ENCODE measurements at regions of chr13 and their contacts with region 1.

Region 1: DNA sequence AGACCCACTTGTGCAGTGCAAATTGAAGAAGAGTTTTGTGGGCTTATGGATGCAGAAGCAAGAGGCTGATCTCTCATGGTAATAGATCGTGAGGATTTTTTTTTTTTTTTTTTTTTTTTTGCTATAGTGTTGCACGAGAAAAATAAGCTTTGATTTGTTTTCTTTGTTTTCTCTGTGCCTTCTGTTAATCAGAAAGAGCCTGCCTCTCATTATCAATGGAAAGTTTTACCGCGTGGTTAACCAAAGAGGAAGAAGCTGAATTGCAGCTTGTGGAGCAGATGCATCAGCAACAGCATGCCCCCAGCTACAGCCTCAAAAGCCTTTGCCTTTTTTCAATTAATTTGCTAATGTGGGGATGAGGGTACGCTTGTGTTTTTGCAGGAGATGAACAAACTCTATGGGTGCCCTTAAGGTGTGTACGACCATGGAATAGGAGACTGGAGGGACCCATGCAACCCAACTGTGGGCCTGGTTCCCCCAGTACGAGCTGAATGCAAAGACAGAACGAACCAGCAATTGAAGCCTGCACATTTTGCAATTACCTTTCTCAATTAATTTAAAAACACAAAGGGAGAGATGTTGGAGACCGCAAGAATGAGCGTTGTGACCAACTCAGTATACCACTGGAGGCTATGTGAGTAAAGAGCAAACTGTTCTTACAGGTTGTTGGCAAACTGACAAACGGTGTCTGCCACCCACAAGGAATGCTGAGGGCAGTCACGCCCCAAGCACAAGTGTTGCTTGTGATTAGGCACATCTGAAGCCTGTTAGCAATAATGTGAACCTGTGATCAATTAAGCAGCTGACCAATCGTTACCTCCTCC is 58.6 kb upstream of the SPRY2 start:
- DNase-seq: peak; percentile 28
- ATAC-seq: peak; percentile 50
- H3K4me3 Mint-ChIP-seq: no peak overlapping the region
- H3K27ac Mint-ChIP-seq: peak overlapping the region; percentile 55
- H3K4me1 Mint-ChIP-seq: peaks cover 27% of the 10 kb centered on the region
- H3K27me3 Mint-ChIP-seq: peaks cover 3% of the 10 kb centered on the region

Region 2: DNA sequence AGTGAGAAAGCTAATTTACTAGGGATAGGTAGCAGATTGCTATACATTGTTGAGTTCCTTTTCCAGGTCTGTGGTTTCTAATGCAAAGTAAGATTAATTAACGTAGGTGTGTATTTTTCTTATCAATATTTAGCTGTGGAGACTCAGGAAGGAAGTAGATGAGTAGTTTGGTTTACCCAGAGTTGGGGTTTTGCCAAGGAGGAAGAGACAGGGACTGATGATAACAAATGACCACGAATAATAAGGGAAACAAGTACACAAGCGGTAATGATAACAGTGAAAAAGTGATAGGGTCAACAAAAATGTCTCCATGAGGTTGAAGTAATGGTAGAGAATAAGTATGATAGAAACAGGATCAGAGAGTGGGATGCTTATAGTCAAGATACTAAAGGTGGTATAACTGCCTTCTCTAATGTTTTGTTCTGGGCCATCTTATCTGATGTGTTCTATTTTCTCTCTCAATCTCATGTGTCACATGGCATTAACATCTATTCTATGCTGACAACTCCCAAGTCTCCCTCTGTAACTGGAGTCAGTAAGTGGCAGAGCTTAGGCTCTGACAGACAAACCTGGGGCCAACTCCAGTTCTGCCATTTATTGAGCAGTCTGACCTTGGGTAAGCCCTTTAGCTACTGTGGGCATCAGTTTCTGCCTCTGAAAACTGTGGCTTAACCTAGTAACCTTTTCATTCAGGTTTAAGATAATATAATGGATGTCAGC is 1749.4 kb before region 1 on chr13:
- CTCF ChIA-PET with region 1: no interaction called
- POLR2A ChIA-PET with region 1: interaction called, 10 read pairs
- intact Hi-C with region 1: no loop called
- DNase-seq: no peak
- ATAC-seq: no peak
- H3K4me3 Mint-ChIP-seq: no peak overlapping the region
- H3K27ac Mint-ChIP-seq: no peak overlapping the region
- H3K4me1 Mint-ChIP-seq: peaks cover 12% of the 10 kb centered on the region
- H3K27me3 Mint-ChIP-seq: no peaks in the 10 kb centered on the region

Region 3: DNA sequence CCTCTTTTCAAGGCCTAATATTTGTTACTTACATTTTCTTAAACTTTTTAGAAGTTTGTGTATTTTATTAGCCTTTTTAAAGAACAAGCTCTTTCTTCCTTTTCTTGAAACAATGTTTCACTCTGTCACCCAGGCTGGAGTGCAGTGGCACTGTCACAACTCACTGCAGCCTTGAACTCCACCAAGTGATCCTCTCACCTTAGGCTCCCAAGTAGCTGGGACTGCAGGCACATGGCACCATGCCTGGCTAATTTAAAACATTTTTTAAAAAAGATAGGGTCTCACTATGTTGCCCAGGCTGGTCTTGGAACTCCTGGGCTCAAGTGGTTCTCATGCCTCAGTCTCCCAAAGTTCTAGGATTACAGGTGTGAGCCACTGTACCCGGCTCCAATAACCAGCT is 133.6 kb after region 1 on chr13:
- CTCF ChIA-PET with region 1: no interaction called
- POLR2A ChIA-PET with region 1: no interaction called
- intact Hi-C with region 1: no loop called
- DNase-seq: no peak
- ATAC-seq: no peak
- H3K4me3 Mint-ChIP-seq: no peak overlapping the region
- H3K27ac Mint-ChIP-seq: no peak overlapping the region
- H3K4me1 Mint-ChIP-seq: no peaks in the 10 kb centered on the region
- H3K27me3 Mint-ChIP-seq: no peaks in the 10 kb centered on the region

Region 4: GRCh38 chr13:80547341-80547740 is 147.8 kb after region 1 on chr13:
- CTCF ChIA-PET with region 1: no interaction called
- POLR2A ChIA-PET with region 1: no interaction called
- intact Hi-C with region 1: no loop called
- DNase-seq: no peak
- ATAC-seq: no peak
- H3K4me3 Mint-ChIP-seq: no peak overlapping the region
- H3K27ac Mint-ChIP-seq: no peak overlapping the region
- H3K4me1 Mint-ChIP-seq: peaks cover 5% of the 10 kb centered on the region
- H3K27me3 Mint-ChIP-seq: no peaks in the 10 kb centered on the region

Region 5: DNA sequence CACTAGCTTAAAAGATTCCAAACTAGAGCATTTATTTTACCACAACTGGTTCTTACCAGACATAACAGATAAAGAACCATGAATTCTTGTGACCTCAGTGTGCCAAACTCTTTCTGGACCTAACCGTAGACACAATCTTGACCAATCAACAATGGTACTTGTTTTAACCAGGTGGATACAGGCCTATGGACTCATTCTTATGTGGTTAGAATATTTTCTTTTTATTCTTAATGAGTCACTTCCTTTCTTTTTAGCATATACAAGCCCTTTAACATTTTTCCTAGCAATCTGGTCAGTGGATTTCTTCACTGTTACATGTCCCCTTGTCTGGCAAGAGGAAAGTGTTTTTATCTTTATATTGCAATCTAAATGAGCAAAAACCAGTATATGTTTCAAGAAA is 733.5 kb after region 1 on chr13:
- CTCF ChIA-PET with region 1: no interaction called
- POLR2A ChIA-PET with region 1: no interaction called
- intact Hi-C with region 1: loop called in 1 of 2 experiments (anchors 10 kb)
- DNase-seq: no peak
- ATAC-seq: no peak
- H3K4me3 Mint-ChIP-seq: no peak overlapping the region
- H3K27ac Mint-ChIP-seq: no peak overlapping the region
- H3K4me1 Mint-ChIP-seq: no peaks in the 10 kb centered on the region
- H3K27me3 Mint-ChIP-seq: no peaks in the 10 kb centered on the region

Measured in activated CD4-positive, alpha-beta T cell treated with anti-CD3 and anti-CD28 coated beads for 36 hours (primary cell).